ENCODE measurements at regions of chr22 and their contacts with region 1.

Region 1: GRCh38 chr22:37260901-37261336 is 16.9 kb upstream of the RAC2 start:
- DNase-seq: peak; percentile 82
- ATAC-seq: peak; percentile 85
- H3K4me3 ChIP-seq: no peak overlapping the region
- H3K4me3 Mint-ChIP-seq: peak overlapping the region; percentile 27
- H3K27ac ChIP-seq: no peak overlapping the region
- H3K27ac Mint-ChIP-seq: peak overlapping the region; percentile 12
- H3K4me1 ChIP-seq: peaks cover 27 to 36% of the 10 kb centered on the region in 2 donors
- H3K4me1 Mint-ChIP-seq: peaks cover 31% of the 10 kb centered on the region
- H3K27me3 ChIP-seq: no peaks in the 10 kb centered on the region
- H3K27me3 Mint-ChIP-seq: no peaks in the 10 kb centered on the region
- CTCF ChIP-seq: peak; percentile 95

Region 2: GRCh38 chr22:37148742-37149665 is 111.9 kb before region 1 on chr22:
- CTCF ChIA-PET with region 1: no interaction called
- POLR2A ChIA-PET with region 1: no interaction called
- intact Hi-C with region 1: no loop called
- DNase-seq: no peak
- ATAC-seq: no peak
- H3K4me3 ChIP-seq: peak overlapping the region in 2 of 5 experiments; percentile 3 to 5
- H3K4me3 Mint-ChIP-seq: no peak overlapping the region
- H3K27ac ChIP-seq: no peak overlapping the region
- H3K27ac Mint-ChIP-seq: no peak overlapping the region
- H3K4me1 ChIP-seq: peaks cover 0 to 20% of the 10 kb centered on the region in 2 donors
- H3K4me1 Mint-ChIP-seq: peaks cover 22% of the 10 kb centered on the region
- H3K27me3 ChIP-seq: no peaks in the 10 kb centered on the region
- H3K27me3 Mint-ChIP-seq: no peaks in the 10 kb centered on the region
- CTCF ChIP-seq: no peak

Region 3: DNA sequence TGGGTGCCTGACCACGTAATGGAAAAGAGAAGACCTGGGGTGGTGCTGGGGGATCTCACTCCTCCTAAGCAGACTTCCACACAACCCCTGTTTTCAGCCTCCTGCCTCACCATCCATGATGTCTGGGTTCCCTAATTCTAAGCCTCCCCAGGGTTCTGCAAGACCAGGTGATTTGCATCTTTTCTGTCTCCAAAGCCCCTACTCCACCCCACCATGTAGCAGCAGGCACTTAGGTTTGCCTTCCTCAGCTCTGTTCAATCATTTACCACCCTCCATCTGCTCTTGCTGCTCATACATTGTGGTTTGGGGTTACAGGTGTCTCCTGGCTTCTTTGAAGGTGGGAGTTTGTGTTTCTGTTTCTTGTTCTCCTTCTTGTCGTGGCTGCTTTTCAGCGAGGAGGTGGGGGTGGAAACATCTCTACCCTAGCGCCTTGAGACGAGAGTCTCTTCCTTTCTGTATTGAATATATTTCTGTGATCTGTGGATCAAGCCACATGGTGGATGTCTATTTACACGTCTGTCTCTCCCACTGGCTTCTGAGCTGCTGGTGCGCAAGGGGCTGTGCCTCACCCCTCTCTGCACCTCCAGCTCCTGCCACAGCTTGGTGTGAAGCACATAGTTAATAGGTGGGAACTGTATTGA is 42.0 kb before region 1 on chr22:
- CTCF ChIA-PET with region 1: interaction called, 118 read pairs
- POLR2A ChIA-PET with region 1: interaction called, 3 read pairs
- intact Hi-C with region 1: loop called (anchors 2 kb)
- DNase-seq: peak; percentile 93
- ATAC-seq: peak; percentile 88
- H3K4me3 ChIP-seq: peak overlapping the region in 4 of 5 experiments; percentile 11 to 29 (median 22)
- H3K4me3 Mint-ChIP-seq: peak overlapping the region; percentile 69
- H3K27ac ChIP-seq: peak overlapping the region; percentile 87 to 93
- H3K27ac Mint-ChIP-seq: peak overlapping the region; percentile 94
- H3K4me1 ChIP-seq: peaks cover 65 to 74% of the 10 kb centered on the region in 2 donors
- H3K4me1 Mint-ChIP-seq: peaks cover 68% of the 10 kb centered on the region
- H3K27me3 ChIP-seq: no peaks in the 10 kb centered on the region
- H3K27me3 Mint-ChIP-seq: no peaks in the 10 kb centered on the region
- CTCF ChIP-seq: no peak

Region 4: DNA sequence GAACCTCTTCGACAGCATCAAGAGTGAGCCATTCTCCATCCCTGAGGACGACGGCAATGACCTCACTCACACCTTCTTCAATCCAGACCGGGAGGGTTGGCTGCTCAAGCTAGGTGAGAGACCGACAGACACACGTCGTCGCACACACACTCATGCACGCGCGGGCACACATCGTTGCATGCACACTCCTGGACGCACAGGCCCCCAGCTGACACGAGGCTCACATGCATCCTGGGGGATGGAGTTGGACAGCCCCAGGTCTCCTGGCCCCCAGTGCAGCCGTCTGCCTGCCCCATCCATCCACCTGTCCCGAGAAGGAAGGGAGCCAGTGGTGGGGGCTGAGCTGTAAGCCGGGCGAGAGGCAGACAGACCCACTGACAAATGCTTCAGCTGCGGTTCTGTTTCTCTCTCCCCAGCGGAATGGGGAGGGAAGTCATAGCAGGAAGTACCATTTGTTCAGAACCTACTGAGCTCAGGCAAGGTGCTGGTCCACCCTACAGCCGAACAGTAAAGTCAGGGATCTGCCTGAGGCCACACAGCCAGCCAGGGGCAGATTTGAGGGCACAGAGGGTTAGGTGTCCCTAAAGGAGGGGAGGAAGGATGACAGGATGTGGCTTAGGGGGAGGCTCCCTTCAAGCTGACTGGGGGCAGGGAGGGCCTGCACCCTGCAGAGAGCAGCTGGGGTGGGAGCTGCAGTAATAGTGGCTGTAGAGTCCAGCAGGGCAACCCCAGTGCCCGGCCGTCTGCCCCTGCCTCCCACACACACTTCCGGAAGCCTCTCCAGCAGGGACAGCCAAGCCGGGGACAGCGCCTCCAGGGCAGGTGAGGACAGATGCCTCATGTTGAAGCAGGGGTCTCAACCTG is 48.5 kb after region 1 on chr22:
- CTCF ChIA-PET with region 1: interaction called, 64 read pairs
- POLR2A ChIA-PET with region 1: no interaction called
- intact Hi-C with region 1: no loop called
- DNase-seq: peak; percentile 43
- ATAC-seq: peak; percentile 9
- H3K4me3 ChIP-seq: peak overlapping the region in 1 of 5 experiments; percentile 1
- H3K4me3 Mint-ChIP-seq: peak overlapping the region; percentile 64
- H3K27ac ChIP-seq: peak overlapping the region; percentile 50 to 52
- H3K27ac Mint-ChIP-seq: peak overlapping the region; percentile 91
- H3K4me1 ChIP-seq: peaks cover 57 to 77% of the 10 kb centered on the region in 2 donors
- H3K4me1 Mint-ChIP-seq: peaks cover 76% of the 10 kb centered on the region
- H3K27me3 ChIP-seq: no peaks in the 10 kb centered on the region
- H3K27me3 Mint-ChIP-seq: no peaks in the 10 kb centered on the region
- CTCF ChIP-seq: no peak

Region 5: DNA sequence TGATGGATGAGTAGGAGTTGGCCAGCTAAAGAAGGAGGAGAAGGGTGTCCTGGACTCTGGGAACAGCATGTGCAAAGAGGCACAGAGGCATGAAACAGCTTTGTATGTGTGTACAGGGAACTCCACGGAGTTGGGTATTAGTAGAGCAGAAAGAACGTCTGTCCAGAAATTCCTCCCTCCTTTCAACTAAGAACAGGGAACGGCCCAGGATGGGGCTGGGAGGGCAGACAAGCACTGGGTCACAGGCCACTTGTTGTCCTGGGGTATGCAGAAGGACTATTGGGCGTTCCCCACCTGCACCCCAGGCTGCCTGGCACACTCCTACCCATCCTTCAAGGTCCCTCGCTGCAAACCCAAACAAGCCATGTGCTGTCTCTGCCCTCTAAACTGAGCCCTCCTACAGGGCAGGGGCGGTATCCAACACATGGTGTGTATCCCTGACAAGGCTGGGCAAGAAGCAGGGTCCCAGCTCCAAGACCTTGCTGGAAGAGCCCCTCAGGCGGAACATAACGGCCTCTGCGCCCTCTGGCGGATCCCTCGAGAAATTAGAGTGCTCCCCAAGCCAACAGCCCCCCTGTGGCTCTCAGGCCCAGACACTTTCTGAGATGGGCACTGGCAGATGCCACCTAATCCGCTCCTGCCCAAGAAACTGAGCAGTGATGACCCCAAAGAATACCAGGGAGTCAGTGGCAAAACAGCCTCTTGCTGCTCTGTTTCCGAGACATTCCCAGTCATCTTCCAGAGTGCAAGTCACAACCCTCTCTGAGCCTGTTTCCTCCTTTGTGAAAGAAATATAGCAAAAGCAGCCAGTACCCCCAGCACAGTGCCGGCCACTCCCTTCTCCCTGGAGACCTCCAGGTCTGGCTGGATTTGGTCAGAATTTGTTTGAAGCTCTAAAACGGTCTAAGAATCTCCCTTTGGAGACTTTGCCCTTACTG is 168.0 kb after region 1 on chr22:
- CTCF ChIA-PET with region 1: interaction called, 15 read pairs
- POLR2A ChIA-PET with region 1: no interaction called
- intact Hi-C with region 1: no loop called
- DNase-seq: peak; percentile 75
- ATAC-seq: peak; percentile 54
- H3K4me3 ChIP-seq: no peak overlapping the region
- H3K4me3 Mint-ChIP-seq: peak overlapping the region; percentile 44
- H3K27ac ChIP-seq: no peak overlapping the region
- H3K27ac Mint-ChIP-seq: no peak overlapping the region
- H3K4me1 ChIP-seq: peaks cover 24 to 27% of the 10 kb centered on the region in 2 donors
- H3K4me1 Mint-ChIP-seq: peaks cover 21% of the 10 kb centered on the region
- H3K27me3 ChIP-seq: peaks cover 0 to 84% (median 27%) of the 10 kb centered on the region in 4 experiments
- H3K27me3 Mint-ChIP-seq: peaks cover 69% of the 10 kb centered on the region
- CTCF ChIP-seq: peak; percentile 69

Region 6: DNA sequence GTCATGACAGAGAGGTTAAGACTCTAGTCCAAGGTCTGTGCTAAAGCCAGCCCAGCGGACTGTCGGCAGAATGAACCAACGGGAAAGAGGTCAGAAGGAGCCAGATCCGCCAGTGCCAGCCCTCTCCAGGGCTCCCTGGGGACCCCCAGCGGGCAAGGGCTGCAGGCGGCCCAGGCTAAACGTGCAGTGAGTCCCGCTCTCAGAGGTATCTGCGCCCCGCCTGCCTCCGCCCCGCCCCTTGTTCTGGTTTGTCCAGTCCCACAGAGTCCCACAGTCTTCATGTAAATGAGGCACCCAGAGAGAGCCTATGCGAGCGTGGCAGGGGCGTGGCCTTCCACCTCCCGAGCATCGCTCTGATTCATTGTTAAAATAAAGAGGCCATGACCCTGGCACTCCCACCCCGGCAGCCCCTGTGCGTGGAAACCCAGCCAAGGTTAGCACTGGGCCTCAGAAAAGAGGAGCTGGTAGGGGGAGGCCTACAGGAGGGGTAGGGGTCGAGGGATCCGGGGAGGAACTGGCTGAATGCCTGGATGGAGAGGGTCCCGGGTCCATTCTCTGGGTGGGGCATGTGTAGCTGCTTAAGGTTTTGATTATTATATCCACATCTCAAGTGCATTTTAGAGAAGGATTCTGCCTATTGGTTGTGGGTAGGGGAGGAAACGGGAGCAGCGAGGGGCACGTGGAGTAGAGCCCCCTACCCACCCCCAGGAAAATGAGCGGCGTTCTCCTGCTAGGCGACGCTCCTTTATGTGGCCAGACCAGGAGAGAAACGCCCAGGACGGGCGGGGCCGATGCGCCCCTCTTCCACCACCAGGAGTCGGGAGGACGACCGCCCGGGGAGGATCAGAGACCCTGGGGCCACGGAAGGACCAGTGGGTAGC is 436.0 kb after region 1 on chr22 and contains the start of gene TRIOBP:
- CTCF ChIA-PET with region 1: no interaction called
- POLR2A ChIA-PET with region 1: no interaction called
- intact Hi-C with region 1: no loop called
- DNase-seq: peak; percentile 85
- ATAC-seq: peak; percentile 99
- H3K4me3 ChIP-seq: peak within 1 kb of the TSS in 4 of 5 experiments; percentile 6 to 34 (median 24)
- H3K4me3 Mint-ChIP-seq: peak within 1 kb of the TSS; percentile 72
- H3K27ac ChIP-seq: no peak within 1 kb of the TSS
- H3K27ac Mint-ChIP-seq: peak within 1 kb of the TSS; percentile 37
- H3K4me1 ChIP-seq: peaks cover 9 to 17% of the 10 kb centered on the region in 2 donors
- H3K4me1 Mint-ChIP-seq: peaks cover 11% of the 10 kb centered on the region
- H3K27me3 ChIP-seq: no peaks in the 10 kb centered on the region
- H3K27me3 Mint-ChIP-seq: no peaks in the 10 kb centered on the region
- CTCF ChIP-seq: peak; percentile 35
- total RNA-seq, gene TRIOBP: 47.2 and 47.5 TPM in 2 replicates